GM18951 (cell line): ENCODE measurements at regions of chr2 and their contacts with region 1.

Region 1: DNA sequence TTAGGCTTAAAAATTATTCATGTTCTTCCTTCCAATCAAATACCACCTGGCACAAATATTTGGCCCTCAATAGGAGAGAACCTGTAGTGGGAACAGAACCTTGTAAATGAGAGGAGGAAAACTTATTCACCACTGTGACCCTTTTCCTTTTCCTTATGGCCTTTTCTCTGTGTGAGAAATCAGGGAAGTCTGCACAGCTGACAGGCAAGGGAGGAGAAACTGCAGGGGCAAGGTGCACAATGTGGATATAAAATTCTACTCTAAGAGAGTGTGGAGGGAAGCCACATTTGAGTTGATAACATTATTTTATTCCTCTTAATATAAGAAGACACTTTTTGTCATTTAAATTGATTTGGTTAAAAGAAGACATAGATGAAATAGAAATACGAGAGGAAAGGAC is 1247.0 kb upstream of the CHAC2 start:
- POLR2A ChIP-seq: no peak

Region 2: DNA sequence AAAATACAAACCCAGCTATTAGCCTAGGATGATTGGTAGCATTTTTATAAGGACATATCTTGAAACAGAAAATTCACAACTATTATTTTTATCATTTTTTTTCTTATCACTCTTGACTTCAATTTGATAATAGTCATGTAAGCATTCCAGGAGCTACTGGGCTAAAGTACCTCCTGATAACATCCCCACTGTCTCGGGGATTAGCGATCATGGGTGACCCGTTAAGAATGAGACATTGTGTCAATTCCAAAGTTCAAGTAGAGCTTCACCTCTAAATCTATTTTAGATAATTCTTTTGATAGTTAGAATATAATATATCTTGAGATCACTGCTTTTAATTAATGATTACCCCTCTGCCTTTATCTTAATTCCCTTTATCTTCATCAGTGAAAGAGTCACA is 42.5 kb after region 1 on chr2:
- in situ Hi-C with region 1: loop called (anchors 5 kb)
- POLR2A ChIP-seq: no peak